GM12878 (cell line): ENCODE measurements at regions of chr1 and their contacts with region 1.

Region 1: DNA sequence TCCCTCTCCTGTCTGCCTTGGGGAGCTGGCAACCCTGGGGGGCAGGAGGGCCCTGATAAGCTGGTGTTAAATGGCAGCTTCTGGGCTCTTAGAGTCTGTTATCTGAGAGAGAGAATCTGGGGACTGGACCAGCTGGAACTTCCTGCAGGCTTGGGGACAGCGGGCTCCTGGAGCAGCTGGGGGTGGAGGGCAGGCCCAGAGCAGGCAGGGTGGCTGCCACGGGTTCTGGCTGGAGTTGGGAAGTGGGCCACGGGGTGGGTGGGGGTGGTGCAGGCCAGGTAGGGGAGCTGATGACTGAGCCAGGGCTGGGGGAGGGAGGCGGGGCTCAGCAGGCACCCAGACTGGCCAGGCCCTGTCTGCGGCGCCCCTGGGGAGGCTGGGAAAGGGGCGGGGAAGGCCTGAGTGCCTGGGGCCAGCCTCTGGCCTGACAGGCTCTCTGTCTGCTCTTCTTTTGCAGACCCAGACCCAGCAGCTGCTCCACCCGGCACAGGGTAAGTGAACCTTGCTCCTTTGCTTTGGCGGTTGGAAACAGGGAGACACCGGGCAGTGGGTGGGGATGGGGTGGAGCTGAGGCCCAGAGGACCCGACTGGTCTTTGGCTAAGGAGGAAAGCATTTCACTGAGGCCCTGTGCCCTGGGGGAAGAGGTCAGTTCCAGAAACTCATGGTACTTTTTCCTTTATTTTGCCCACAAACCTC is 48.6 kb downstream of the ARHGEF10L start:
- DNase-seq: no peak
- ATAC-seq: no peak; the same call in 2 of the 3 replicates
- H3K4me3 ChIP-seq: no peak overlapping the region
- H3K27ac ChIP-seq: no peak overlapping the region
- H3K4me1 ChIP-seq: no peaks in the 10 kb centered on the region
- H3K27me3 ChIP-seq: no peaks in the 10 kb centered on the region; a peak in 2 of 4 replicates
- CTCF ChIP-seq: no peak
- EP300 ChIP-seq: no peak
- POLR2A ChIP-seq: no peak
- RAD21 ChIP-seq: no peak

Region 2: DNA sequence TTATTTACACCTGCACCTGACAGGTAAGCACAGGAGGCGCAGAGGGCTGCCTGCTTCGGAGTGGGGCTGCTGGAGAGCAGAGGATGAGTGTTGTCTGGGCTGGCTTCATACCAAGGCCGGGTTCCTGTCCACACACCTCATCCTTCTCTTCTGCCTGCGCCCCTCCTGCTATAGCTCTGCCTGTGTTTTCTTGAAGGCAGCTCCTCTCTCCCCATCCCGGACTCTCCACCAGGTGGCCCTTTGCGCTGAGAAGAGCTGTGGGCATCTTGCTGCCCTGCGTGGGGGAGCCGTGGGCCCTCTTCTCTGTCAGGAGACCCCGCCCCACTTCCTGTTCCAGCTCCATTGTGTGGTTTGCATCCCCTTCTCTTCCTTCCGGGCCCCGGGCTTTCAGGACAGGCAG is 13.6 kb before region 1 on chr1:
- CTCF ChIA-PET with region 1: interaction called, 10 read pairs
- POLR2A ChIA-PET with region 1: no interaction called
- RAD21 ChIA-PET with region 1: interaction called, 3 read pairs
- SMC1A ChIA-PET with region 1: no interaction called
- in situ Hi-C with region 1: no loop called
- intact Hi-C with region 1: no loop called
- DNase-seq: no peak
- ATAC-seq: peak; percentile 39
- H3K4me3 ChIP-seq: no peak overlapping the region
- H3K27ac ChIP-seq: no peak overlapping the region
- H3K4me1 ChIP-seq: no peaks in the 10 kb centered on the region
- H3K27me3 ChIP-seq: 0 out of 4 replicates have a peak, but pooled peaks cover 0 to 1% of the 10 kb centered on the region in 2 experiments
- CTCF ChIP-seq: no peak
- EP300 ChIP-seq: no peak
- POLR2A ChIP-seq: no peak
- RAD21 ChIP-seq: no peak

Region 3: GRCh38 chr1:17624611-17625233 is 36.6 kb after region 1 on chr1:
- CTCF ChIA-PET with region 1: no interaction called
- POLR2A ChIA-PET with region 1: no interaction called
- RAD21 ChIA-PET with region 1: no interaction called
- SMC1A ChIA-PET with region 1: no interaction called
- in situ Hi-C with region 1: no loop called
- intact Hi-C with region 1: no loop called
- DNase-seq: no peak
- ATAC-seq: no peak
- H3K4me3 ChIP-seq: no peak overlapping the region
- H3K27ac ChIP-seq: no peak overlapping the region
- H3K4me1 ChIP-seq: no peaks in the 10 kb centered on the region
- H3K27me3 ChIP-seq: peaks cover 0 to 1% of the 10 kb centered on the region in 2 experiments; a peak in 1 of 4 replicates
- CTCF ChIP-seq: no peak
- EP300 ChIP-seq: no peak
- POLR2A ChIP-seq: no peak
- RAD21 ChIP-seq: no peak